Activated T-helper 1 cell treated with anti-CD3 and anti-CD28 coated beads, Interleukin-12 subunit alpha, Interleukin-12 subunit beta, Interleukin-2, Interleukin-4 antibody, amounts not matched to agents 30 ng/mL and 10 ng/mL and 1 ng/mL, durations not matched to agents 14 hours and 24 hours and 36 hours (primary cell): ENCODE measurements at regions of chrX and their contacts with region 1.

Region 1: DNA sequence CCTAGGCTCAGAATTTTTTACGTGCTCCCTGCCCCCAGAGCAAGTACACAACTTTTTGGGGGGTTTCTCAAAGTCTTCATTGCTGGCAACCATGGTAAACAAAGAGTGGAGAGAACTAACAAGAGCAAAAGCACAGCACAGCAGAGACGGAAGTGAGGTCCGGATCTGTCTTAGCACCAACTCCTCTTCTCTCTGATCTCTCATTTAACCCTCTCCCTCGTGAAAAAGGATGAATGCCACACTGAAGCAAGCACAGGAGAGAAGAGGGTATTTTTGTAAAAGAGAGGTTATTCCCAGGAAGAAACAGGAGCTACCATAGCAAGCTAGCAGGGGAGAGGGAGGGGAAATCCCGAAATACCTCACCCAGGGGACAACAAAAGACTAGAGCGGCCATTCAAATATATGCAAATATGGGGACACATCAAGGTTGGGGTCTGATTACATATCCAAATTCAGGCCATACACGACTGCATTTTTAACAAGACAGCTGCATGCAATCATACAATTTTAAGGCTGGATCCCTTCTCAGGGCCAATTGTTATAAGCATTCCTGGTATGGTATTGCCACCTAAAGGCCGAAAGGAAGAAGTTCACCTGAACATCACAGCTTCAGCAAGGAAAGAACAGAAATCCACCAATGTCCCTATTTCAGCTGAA is 46.6 kb downstream of the CD40LG start:
- DNase-seq: no peak
- H3K4me3 Mint-ChIP-seq: peak overlapping the region; percentile 80
- H3K27ac Mint-ChIP-seq: peak overlapping the region; percentile 99
- H3K4me1 Mint-ChIP-seq: peaks cover 70% of the 10 kb centered on the region
- H3K27me3 Mint-ChIP-seq: no peaks in the 10 kb centered on the region

Region 2: GRCh38 chrX:136028251-136028984 is 666.1 kb before region 1 on chrX:
- intact Hi-C with region 1: loop called (anchors 10 kb)
- DNase-seq: no peak
- H3K4me3 Mint-ChIP-seq: no peak overlapping the region
- H3K27ac Mint-ChIP-seq: no peak overlapping the region
- H3K4me1 Mint-ChIP-seq: no peaks in the 10 kb centered on the region
- H3K27me3 Mint-ChIP-seq: no peaks in the 10 kb centered on the region

Region 3: GRCh38 chrX:136397001-136397400 is 297.6 kb before region 1 on chrX:
- intact Hi-C with region 1: loop called (anchors 10 kb)
- DNase-seq: no peak
- H3K4me3 Mint-ChIP-seq: no peak overlapping the region
- H3K27ac Mint-ChIP-seq: no peak overlapping the region
- H3K4me1 Mint-ChIP-seq: no peaks in the 10 kb centered on the region
- H3K27me3 Mint-ChIP-seq: no peaks in the 10 kb centered on the region

Region 4: GRCh38 chrX:136577552-136577951 is 117.0 kb before region 1 on chrX:
- intact Hi-C with region 1: loop called (anchors 1 kb)
- DNase-seq: peak; percentile 63
- H3K4me3 Mint-ChIP-seq: peak overlapping the region; percentile 42
- H3K27ac Mint-ChIP-seq: peak overlapping the region; percentile 80
- H3K4me1 Mint-ChIP-seq: peaks cover 42% of the 10 kb centered on the region
- H3K27me3 Mint-ChIP-seq: no peaks in the 10 kb centered on the region

Region 5: DNA sequence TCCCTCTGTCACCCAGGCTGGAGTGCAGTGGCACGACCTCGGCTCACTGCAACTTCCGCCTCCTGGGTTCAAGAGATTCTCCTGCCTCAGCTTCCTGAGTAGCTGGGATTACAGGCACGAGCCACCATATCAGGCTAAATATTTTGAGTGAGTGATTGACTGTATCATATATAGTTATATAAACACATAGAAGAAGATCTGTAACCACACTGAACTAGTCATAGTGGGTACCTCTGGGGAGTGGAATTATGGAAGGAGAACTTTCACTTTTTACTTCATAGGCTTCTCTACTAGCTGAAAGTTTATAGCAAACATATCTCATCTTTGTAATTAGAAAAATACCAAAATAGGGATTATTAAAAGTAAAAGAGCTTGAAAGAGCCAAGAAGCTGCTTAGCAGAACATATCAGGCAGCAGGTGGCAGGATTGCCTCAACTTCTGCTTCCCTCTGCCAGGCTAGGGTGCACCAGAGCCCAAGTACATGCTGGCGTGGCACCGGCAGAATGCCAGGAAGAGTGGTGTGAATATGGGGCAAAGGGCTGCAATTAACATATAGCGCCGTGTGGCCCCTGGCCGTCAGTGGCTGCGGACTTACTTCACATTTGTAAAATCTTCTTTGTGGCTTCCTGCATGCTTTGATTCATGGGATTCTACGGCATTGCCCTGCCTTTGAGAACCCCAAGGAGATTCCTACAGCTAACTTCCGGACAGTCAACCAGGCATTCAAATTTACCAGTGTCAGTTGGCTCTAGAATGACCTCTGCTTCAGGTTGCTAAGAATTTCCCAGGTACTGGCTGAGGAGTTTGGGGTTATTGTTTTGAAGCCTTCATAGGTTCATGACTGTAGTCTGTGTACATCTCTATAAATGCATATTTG is 86.0 kb before region 1 on chrX:
- intact Hi-C with region 1: loop called (anchors 1 kb)
- DNase-seq: no peak
- H3K4me3 Mint-ChIP-seq: peak overlapping the region; percentile 31
- H3K27ac Mint-ChIP-seq: peak overlapping the region; percentile 44
- H3K4me1 Mint-ChIP-seq: peaks cover 47% of the 10 kb centered on the region
- H3K27me3 Mint-ChIP-seq: no peaks in the 10 kb centered on the region

Region 6: GRCh38 chrX:136646602-136647239 is 47.8 kb before region 1 on chrX:
- intact Hi-C with region 1: loop called (anchors 1 kb)
- DNase-seq: no peak
- H3K4me3 Mint-ChIP-seq: peak overlapping the region; percentile 99
- H3K27ac Mint-ChIP-seq: peak overlapping the region; percentile 94
- H3K4me1 Mint-ChIP-seq: peaks cover 57% of the 10 kb centered on the region
- H3K27me3 Mint-ChIP-seq: no peaks in the 10 kb centered on the region

Region 7: GRCh38 chrX:136674270-136674985 is 20.1 kb before region 1 on chrX:
- intact Hi-C with region 1: loop called (anchors 1 kb)
- DNase-seq: no peak
- H3K4me3 Mint-ChIP-seq: peak overlapping the region; percentile 64
- H3K27ac Mint-ChIP-seq: peak overlapping the region; percentile 97
- H3K4me1 Mint-ChIP-seq: peaks cover 70% of the 10 kb centered on the region
- H3K27me3 Mint-ChIP-seq: no peaks in the 10 kb centered on the region